MCF 10A (cell line): ENCODE measurements at regions of chr1 and their contacts with region 1.

Region 1: GRCh38 chr1:146012737-146013403 is 8.7 kb downstream of the HJV start:
- DNase-seq: peak; percentile 87
- H3K4me3 Mint-ChIP-seq: no peak overlapping the region
- H3K27ac Mint-ChIP-seq: no peak overlapping the region
- H3K4me1 Mint-ChIP-seq: peaks cover 9% of the 10 kb centered on the region
- H3K27me3 Mint-ChIP-seq: no peaks in the 10 kb centered on the region
- CTCF ChIP-seq: peak; percentile 89

Region 2: DNA sequence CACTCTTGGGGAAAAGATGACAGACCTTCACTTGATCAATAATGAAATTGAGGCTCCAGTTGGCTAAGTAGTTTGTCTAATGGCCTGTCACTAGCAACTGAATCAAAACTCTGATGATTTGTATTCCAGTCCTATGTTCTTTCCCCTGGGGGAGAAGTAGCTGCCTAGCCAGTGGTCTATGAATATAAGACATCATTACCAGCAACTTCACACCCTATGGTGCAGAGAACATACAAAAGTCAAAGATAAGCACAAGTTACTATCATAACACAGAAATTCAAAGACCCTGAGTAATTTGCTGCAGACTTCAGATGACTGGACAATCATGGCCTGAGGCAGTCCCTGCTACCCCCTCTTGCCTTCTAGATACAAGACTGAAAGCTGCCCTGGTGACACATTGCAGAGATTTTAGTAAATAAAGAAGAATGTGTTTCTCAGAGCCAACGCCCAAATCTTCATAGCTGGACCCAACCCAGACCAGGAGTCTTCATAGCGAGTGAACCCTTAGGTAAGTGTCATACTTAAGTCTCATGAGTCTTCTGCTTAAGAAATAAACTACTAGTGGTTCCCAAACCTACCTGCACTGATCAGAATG is 306.7 kb before region 1 on chr1:
- CTCF ChIA-PET with region 1: no interaction called
- POLR2A ChIA-PET with region 1: no interaction called
- intact Hi-C with region 1: no loop called
- DNase-seq: peak; percentile 68
- H3K4me3 Mint-ChIP-seq: no peak overlapping the region
- H3K27ac Mint-ChIP-seq: peak overlapping the region; percentile 65
- H3K4me1 Mint-ChIP-seq: peaks cover 26% of the 10 kb centered on the region
- H3K27me3 Mint-ChIP-seq: no peaks in the 10 kb centered on the region
- CTCF ChIP-seq: no peak

Region 3: GRCh38 chr1:145949219-145949618 is 63.7 kb before region 1 on chr1:
- CTCF ChIA-PET with region 1: no interaction called
- POLR2A ChIA-PET with region 1: no interaction called
- intact Hi-C with region 1: no loop called
- DNase-seq: no peak
- H3K4me3 Mint-ChIP-seq: no peak overlapping the region
- H3K27ac Mint-ChIP-seq: no peak overlapping the region
- H3K4me1 Mint-ChIP-seq: peaks cover 7% of the 10 kb centered on the region
- H3K27me3 Mint-ChIP-seq: no peaks in the 10 kb centered on the region
- CTCF ChIP-seq: no peak

Region 4: GRCh38 chr1:145972580-145972979 is 40.3 kb before region 1 on chr1:
- CTCF ChIA-PET with region 1: interaction called, 773 read pairs
- POLR2A ChIA-PET with region 1: interaction called, 1,309 read pairs
- intact Hi-C with region 1: loop called (anchors 1 kb)
- DNase-seq: no peak
- H3K4me3 Mint-ChIP-seq: no peak overlapping the region
- H3K27ac Mint-ChIP-seq: no peak overlapping the region
- H3K4me1 Mint-ChIP-seq: no peaks in the 10 kb centered on the region
- H3K27me3 Mint-ChIP-seq: no peaks in the 10 kb centered on the region
- CTCF ChIP-seq: no peak